Tibial artery (tissue), 4 donors: ENCODE measurements at regions of chr16 and their contacts with region 1.

Region 1: GRCh38 chr16:67159593-67160406 is at the starts of genes FBXL8 and TRADD:
- DNase-seq: peak; percentile 66 to 88
- H3K4me3 ChIP-seq: peak within 1 kb of the TSS; percentile 70 to 93
- H3K27ac ChIP-seq: peak within 1 kb of the TSS; percentile 71 to 80
- H3K4me1 ChIP-seq: peaks cover 4 to 71% (median 60%) of the 10 kb centered on the region in 4 donors
- H3K27me3 ChIP-seq: peaks cover 0 to 31% of the 10 kb centered on the region in 2 donors
- CTCF ChIP-seq: peak in 1 of 2 experiments; percentile 14

Region 2: DNA sequence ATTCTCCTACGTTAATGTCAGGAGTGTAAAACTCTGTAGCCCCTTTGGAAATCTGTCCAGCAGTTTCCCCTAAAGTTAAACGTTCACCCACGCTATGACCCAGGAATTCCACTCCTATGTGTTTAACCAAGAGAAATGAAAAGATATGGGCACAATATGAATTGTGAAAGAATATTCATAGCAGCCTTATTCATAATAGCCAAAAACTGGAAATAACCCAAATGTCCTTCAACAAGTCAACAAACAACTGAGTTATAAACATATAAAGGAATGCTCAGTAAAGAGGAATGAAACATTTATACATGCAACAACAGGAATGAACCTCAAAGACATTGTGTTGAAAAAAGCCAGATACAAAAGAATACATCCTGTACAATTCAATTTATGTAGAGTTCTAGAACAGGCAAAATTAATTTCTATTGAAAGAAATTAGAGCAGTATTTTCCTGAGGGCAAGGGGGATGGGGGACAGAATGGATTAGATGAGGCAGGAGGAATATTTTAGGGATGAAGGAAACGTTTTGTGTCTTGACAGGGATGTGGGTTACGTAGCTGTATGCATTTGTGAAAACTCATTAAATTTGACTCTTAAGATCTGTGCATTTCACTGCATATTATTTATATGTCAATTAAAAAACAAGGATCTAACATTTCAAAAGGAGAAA is 1080.0 kb before region 1 on chr16:
- intact Hi-C with region 1: loop called (anchors 5 kb)
- DNase-seq: no peak
- H3K4me3 ChIP-seq: no peak overlapping the region
- H3K27ac ChIP-seq: no peak overlapping the region
- H3K4me1 ChIP-seq: peaks cover 0 to 10% (median 3%) of the 10 kb centered on the region in 4 donors
- H3K27me3 ChIP-seq: no peaks in the 10 kb centered on the region
- CTCF ChIP-seq: no peak

Region 3: GRCh38 chr16:66880288-66881013 is 279.3 kb before region 1 on chr16 and contains the start of gene PDP2:
- intact Hi-C with region 1: loop called (anchors 5 kb)
- DNase-seq: peak; percentile 97 to 98
- H3K4me3 ChIP-seq: peak within 1 kb of the TSS; percentile 80 to 97
- H3K27ac ChIP-seq: peak within 1 kb of the TSS; percentile 78 to 84
- H3K4me1 ChIP-seq: peaks cover 4 to 24% (median 15%) of the 10 kb centered on the region in 4 donors
- H3K27me3 ChIP-seq: no peaks in the 10 kb centered on the region
- CTCF ChIP-seq: no peak

Region 4: GRCh38 chr16:67017810-67018488 is 141.9 kb before region 1 on chr16:
- intact Hi-C with region 1: loop called (anchors 5 kb)
- DNase-seq: peak; percentile 55 to 74
- H3K4me3 ChIP-seq: no peak overlapping the region
- H3K27ac ChIP-seq: no peak overlapping the region
- H3K4me1 ChIP-seq: peaks cover 0 to 25% (median 18%) of the 10 kb centered on the region in 4 donors
- H3K27me3 ChIP-seq: no peaks in the 10 kb centered on the region
- CTCF ChIP-seq: peak; percentile 45 to 63